CD4-positive, alpha-beta T cell (primary cell): ENCODE measurements at regions of chr1 and their contacts with region 1.

Region 1: DNA sequence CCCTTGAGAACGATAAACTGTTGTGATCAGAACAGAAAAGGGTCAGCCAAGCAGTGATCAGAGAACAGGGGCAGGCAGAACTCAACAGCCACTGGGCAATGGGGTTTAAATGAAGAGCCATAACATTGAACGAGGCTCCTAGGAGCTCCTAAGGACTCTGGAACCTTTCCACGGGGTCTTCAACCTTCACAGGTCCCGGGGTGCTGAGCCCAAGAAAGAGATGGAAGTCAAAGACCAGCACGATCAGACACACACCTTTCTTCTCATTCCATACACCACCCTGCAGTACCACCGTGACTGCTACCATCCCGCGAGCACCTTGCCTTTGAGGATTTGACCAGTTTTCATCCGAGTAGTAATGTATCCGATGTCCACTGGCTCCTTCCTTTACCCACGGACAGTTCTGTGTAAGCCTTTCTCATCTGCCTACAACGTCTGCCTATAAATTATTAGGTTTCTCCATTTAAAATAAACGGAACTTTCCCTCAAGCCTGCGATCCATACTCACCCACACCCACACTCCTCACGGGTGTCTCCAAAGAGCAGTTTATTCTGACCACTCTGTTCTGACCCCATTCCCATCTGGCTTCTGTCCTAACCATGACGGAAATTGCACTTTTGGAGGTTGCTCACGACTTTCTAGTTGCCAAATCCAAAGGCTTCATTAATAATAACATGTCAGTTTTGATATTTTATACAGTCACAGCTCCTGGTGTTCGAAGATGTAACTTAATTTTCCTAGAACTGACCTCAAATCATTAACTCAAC is 16.8 kb upstream of the HHAT start:
- DNase-seq: no peak
- ATAC-seq: no peak
- H3K4me3 ChIP-seq: peak overlapping the region; percentile 59
- H3K4me3 Mint-ChIP-seq: peak overlapping the region; percentile 74
- H3K27ac ChIP-seq: no peak overlapping the region
- H3K27ac Mint-ChIP-seq: no peak overlapping the region
- H3K4me1 ChIP-seq: peaks cover 8% of the 10 kb centered on the region
- H3K4me1 Mint-ChIP-seq: peaks cover 6% of the 10 kb centered on the region
- H3K27me3 ChIP-seq: peaks cover 0 to 12% of the 10 kb centered on the region in 2 experiments
- H3K27me3 Mint-ChIP-seq: peaks cover 25% of the 10 kb centered on the region
- CTCF ChIP-seq: no peak

Region 2: GRCh38 chr1:209576798-209577197 is 735.1 kb before region 1 on chr1:
- CTCF ChIA-PET with region 1: no interaction called
- POLR2A ChIA-PET with region 1: no interaction called
- intact Hi-C with region 1: loop called in 1 of 2 experiments (anchors 10 kb)
- DNase-seq: peak; percentile 34 to 77 (median 54)
- ATAC-seq: peak; percentile 74
- H3K4me3 ChIP-seq: no peak overlapping the region
- H3K4me3 Mint-ChIP-seq: no peak overlapping the region
- H3K27ac ChIP-seq: no peak overlapping the region
- H3K27ac Mint-ChIP-seq: no peak overlapping the region
- H3K4me1 ChIP-seq: no peaks in the 10 kb centered on the region
- H3K4me1 Mint-ChIP-seq: no peaks in the 10 kb centered on the region
- H3K27me3 ChIP-seq: peaks cover 4 to 10% of the 10 kb centered on the region in 2 experiments
- H3K27me3 Mint-ChIP-seq: no peaks in the 10 kb centered on the region
- CTCF ChIP-seq: peak; percentile 94

Region 3: GRCh38 chr1:209860293-209860881 is 451.5 kb before region 1 on chr1:
- CTCF ChIA-PET with region 1: no interaction called
- POLR2A ChIA-PET with region 1: no interaction called
- intact Hi-C with region 1: loop called (anchors 1 kb)
- DNase-seq: peak; percentile 50 to 86 (median 60)
- ATAC-seq: peak; percentile 81
- H3K4me3 ChIP-seq: no peak overlapping the region
- H3K4me3 Mint-ChIP-seq: no peak overlapping the region
- H3K27ac ChIP-seq: no peak overlapping the region
- H3K27ac Mint-ChIP-seq: no peak overlapping the region
- H3K4me1 ChIP-seq: no peaks in the 10 kb centered on the region
- H3K4me1 Mint-ChIP-seq: no peaks in the 10 kb centered on the region
- H3K27me3 ChIP-seq: peaks cover 4 to 7% of the 10 kb centered on the region in 2 experiments
- H3K27me3 Mint-ChIP-seq: peaks cover 27% of the 10 kb centered on the region
- CTCF ChIP-seq: peak; percentile 97

Region 4: GRCh38 chr1:210143465-210144062 is 168.3 kb before region 1 on chr1:
- CTCF ChIA-PET with region 1: no interaction called
- POLR2A ChIA-PET with region 1: no interaction called
- intact Hi-C with region 1: loop called (anchors 2 kb)
- DNase-seq: peak in 10 of 14 experiments; percentile 1 to 33 (median 20)
- ATAC-seq: no peak
- H3K4me3 ChIP-seq: no peak overlapping the region
- H3K4me3 Mint-ChIP-seq: no peak overlapping the region
- H3K27ac ChIP-seq: no peak overlapping the region
- H3K27ac Mint-ChIP-seq: no peak overlapping the region
- H3K4me1 ChIP-seq: no peaks in the 10 kb centered on the region
- H3K4me1 Mint-ChIP-seq: no peaks in the 10 kb centered on the region
- H3K27me3 ChIP-seq: no peaks in the 10 kb centered on the region
- H3K27me3 Mint-ChIP-seq: peaks cover 31% of the 10 kb centered on the region
- CTCF ChIP-seq: peak; percentile 56